Posterior cingulate gyrus (tissue), 11 donors: ENCODE measurements at regions of chr6 and their contacts with region 1.

Region 1: GRCh38 chr6:56955171-56956045 is 501 bp downstream of the BEND6 start:
- DNase-seq: peak in 9 of 10 donors; percentile 50 to 94 (median 85)

Region 2: DNA sequence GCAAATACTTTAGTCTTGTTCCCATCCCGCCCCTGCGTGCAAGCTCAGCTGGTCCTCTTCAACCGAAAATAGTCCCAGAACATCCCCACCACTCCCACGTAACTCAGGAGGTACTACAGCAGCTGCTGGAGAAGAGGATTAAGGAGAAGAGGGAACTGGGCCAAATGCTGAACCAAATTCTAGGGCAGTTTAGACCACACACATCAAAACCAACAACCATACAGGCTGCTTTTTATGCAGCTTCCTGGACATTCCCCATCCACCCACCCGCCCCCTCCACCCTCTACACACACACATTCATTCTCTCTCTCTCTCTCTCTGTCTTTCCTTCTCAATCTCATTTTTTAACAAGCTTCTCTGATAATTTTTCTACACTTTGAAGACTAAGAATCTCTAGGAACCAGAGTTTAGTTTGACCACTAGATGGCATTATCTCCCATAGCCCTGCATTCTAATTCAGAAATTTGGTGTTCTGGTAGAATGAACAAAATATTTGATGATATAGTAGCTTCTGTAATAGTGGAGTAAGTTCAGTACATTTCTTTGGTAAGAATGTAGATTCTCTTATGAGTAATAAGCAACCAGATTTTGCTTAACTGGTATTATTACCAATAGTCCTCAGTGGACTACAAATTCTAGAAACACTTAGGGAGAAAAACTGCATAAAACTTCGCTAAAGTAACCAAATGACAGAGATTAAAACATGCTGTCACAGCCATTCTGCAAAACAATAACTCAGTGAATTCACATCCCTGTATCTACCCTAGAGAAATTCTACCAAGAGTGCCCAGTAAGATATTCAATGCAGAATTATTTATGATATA is 52.6 kb before region 1 on chr6:
- intact Hi-C with region 1: loop called (anchors 2 kb)
- DNase-seq: peak in 8 of 10 donors; percentile 21 to 91 (median 54)

Region 3: DNA sequence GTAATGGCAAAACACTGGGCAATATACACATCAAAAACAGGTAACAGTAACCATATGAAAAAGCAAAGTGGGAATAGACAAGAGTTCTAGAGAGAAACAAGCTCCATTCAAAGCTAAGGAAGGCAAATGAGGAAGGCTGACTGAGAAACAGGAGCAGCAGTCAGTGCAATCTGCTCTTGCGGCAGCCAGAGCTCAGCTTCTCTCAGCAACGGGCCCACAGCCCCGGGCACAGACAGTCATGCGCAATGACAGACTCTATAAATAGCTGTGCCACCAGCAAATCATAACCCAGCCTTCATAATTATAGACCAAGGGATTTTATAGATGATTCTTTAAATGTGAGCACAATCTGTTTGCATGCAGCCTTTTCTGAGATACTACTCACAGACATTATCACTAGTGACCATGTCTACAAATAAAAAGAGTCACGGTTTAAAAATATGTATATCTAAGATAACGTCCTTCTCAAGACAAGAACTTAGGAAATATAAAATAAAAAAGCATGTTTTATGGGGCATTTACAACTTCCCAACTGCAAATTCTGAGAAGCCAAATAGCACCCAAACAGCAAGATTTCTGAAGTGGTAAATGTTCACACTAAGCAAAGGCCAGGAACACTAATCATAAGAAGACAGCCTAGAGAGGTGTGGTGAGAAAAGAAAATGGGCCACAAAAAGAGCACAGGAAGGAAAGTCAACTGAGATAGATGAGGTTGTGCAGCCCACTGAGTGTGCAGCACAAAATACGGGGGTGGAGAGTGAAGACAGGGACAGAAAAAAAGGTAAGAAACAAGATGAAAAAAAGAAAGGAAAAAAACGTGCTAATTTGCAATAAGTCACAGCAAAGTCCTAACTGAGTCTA is 40.4 kb before region 1 on chr6:
- intact Hi-C with region 1: loop called (anchors 5 kb)
- DNase-seq: peak; percentile 48 to 95 (median 72)

Region 4: GRCh38 chr6:56970849-56971248 is 15.4 kb after region 1 on chr6:
- intact Hi-C with region 1: no loop called
- DNase-seq: no peak

Region 5: DNA sequence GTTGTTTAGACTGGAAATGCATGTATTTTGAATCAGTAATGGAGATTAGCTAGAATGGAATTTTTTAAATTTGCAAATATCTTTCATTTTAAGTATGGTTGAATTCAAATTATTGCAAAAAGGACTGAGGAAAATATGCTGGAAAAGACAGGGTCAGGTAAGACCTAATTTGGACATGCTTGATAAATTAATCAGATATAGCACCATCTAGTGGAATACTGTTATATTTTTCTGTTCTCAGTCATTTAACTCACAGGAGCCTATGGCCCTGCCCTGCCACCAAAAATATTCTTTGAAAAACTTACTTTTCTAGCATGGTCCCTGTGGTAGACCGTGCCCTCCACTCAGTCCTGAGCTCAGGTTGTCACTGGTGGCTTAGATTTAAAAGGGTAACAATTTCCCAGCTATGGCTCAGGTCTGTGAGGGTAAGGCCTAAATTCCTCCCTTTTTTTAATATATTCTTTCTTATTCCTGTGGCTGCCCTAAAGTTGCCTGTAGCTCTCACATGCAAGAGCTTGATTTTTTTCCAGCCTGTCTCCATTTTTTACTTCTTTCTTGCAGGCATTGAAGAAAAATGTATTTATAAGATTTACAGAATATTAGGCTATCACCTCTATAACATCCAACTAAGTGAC is 65.8 kb after region 1 on chr6:
- intact Hi-C with region 1: loop called (anchors 5 kb)
- DNase-seq: no peak

Region 6: GRCh38 chr6:57089687-57090460 is 134.5 kb after region 1 on chr6 and contains the start of gene ZNF451:
- intact Hi-C with region 1: loop called (anchors 2 kb)
- DNase-seq: peak; percentile 97 to 100 (median 98)

Region 7: DNA sequence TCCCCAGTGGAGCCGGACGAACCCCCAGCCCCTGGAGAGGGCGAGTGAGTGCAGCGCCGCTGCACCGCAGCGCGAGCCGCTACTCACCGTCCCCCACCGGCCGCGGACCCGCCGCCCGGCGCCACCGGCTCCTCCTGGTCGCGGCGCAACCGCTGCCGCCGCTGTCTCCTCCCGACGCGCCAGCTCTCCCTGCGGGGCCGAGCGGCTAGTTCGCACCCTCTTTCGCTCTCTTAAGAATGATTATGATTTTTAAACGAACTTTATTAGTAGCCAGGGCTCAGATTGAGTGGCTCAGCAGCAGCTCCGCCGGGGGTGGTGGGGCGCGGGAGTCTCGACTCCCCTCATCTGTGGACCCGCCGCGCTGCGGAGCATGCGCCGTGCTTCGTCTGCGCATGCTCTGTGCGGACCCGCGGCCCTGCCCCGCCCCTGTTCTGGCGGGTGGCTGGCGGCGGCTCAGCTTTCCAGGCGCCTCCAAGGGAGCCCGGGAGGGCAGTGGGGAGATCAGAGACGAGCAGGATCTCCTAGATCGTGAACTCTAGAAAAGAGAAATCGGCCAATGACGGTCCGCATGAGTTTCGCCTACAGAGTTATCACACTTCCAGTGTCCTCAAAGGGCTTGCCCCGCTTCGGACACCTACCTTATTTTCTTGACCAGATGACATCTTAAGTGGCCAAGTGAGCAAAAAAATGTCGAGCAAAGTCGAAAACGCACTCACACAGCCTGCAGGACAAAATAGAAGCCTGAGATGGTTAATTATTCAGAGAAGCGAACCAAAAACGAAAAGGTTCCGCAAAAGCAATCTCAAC is 266.7 kb after region 1 on chr6 and contains the start of gene RAB23:
- intact Hi-C with region 1: loop called (anchors 10 kb)
- DNase-seq: peak; percentile 69 to 98 (median 81)